Head of caudate nucleus (tissue), 42 donors: ENCODE measurements at regions of chr6 and their contacts with region 1.

Region 1: GRCh38 chr6:39669207-39669972 is 55.8 kb downstream of the KIF6 start:
- DNase-seq: no peak

Region 2: GRCh38 chr6:39517756-39518155 is 151.6 kb before region 1 on chr6:
- intact Hi-C with region 1: no loop called
- DNase-seq: no peak

Region 3: DNA sequence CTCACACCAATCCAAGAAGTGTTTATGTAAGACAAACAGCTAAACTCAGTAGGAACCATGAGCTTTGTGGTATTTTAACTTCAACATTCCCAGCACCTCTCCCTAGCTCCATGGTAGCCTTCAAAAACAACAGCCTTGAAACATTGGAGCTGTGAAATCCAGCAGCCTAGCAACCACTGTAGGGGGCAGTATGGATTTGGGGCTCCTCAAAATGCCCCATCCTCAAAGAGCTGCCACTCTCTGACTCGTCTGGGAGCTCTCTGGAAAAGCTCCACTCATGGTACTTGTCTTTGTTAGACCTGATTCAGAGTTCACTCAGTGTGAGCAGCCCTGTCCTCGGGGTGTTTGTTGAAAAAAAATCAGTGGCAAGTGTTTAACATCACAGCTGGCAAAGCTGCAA is 27.1 kb before region 1 on chr6:
- intact Hi-C with region 1: no loop called
- DNase-seq: peak in 4 of 42 donors; percentile 8 to 27 (median 10)

Region 4: DNA sequence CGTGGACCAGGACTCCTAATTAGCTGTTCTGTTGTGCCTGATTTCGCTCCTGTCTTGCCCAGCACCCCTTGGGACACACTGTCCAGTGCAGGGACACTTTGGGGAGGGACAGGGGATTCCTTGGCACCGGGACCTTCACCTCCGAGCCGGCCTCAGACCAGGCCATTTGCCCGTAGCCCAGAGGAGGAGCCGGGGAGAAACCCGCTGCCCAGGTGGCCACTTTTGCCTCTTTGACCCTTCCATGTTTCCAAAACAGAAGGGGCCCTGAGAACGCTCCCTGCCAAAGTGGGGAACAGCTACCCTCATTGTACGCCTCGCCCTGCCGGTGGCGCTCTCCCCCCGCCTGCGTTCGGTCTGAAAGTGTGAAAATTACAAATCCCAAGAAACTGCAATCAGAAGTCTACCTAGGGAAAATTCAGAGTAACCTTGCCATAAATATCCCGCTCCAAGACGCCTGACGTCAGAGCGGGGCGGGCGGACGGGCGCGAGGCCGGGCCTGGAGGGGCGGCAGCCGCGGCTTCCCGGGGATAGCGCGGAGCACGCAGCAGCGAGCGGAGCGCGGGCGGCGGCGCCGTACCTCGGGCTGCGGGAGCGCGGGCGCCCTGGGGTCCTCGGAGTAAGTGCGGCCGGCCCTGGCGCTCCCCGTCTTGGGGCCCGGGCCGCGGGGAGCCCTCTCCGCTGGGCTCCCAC is 122.6 kb after region 1 on chr6 and contains the start of gene DAAM2:
- intact Hi-C with region 1: loop called (anchors 5 kb)
- DNase-seq: peak in 41 of 42 donors; percentile 14 to 84 (median 67)